Activated CD4-positive, alpha-beta T cell treated with anti-CD3 and anti-CD28 coated beads for 36 hours (primary cell): ENCODE measurements at regions of chr18 and their contacts with region 1.

Region 1: DNA sequence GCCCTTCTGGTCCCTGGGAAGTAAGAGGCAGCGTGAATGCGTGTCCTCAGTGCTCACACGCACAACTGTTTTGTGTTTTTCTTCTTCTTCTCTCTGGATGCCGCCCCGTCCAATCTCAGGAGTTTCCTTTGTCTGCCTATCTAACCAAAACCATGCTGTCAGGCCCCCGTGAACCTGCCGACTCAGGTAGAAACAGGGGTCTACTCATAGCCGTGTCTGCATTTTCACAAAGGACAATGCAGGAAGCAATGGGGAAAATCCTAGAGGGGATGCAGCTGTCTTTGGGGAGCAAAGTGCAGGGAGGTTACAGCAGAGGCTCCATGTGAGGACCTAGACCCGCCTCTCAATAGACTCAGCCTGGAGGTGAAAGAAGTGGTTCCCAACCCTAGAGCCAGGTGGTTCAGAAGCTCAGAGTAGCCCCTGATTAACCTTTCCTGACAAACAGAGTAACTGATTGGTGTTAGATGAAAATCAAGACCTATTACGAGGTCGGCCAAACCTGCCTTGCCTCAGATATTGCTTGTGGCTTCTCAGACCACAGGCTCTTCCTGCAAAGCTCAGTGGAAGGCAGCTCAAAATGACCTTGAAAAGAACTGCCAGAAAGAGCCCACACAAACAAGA is 49.3 kb downstream of the CD226 start:
- DNase-seq: peak; percentile 56
- ATAC-seq: peak; percentile 17
- H3K4me3 Mint-ChIP-seq: peak overlapping the region; percentile 67
- H3K27ac Mint-ChIP-seq: peak overlapping the region; percentile 94
- H3K4me1 Mint-ChIP-seq: peaks cover 74% of the 10 kb centered on the region
- H3K27me3 Mint-ChIP-seq: no peaks in the 10 kb centered on the region

Region 2: DNA sequence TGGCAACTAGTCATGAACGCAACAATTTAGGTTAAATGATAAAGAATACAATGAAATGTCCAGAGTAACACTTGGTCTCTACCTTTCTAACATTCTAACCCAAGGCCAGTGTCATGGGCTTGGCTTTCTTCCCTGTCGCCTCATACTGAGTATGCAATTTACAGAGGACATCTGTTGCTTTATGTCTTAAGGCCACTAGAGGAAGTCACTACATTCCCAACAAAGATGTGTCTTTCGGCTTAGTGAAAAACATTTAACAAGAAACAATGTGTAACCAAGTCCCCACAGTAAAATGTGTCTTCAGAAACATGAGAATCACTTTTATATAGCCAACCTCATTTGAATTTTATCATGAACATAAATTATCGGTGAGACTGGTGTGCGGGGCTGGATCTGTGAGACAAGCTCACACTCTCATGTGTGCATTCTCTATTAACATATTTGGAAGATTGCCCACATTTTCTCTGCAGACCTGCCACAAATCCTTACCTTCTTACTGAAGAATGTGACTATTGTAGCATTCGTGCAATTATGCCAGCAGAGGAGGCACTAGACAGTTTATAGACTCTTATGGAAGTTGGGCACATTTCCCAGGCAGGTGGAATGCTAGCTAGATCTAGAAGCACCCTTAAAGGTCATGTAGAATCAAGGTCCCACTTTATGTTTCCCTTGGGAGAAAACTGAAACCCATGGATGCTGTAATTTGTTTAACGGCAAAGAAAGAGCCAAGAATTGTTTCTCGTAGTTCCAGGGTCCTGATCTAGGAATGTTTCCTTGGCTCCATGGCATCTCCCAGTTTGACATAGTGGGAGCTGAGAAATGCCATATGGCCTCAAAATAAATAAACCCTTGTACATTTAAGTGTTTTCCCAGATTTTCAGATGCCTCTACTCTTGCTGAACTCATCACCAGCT is 52.5 kb before region 1 on chr18:
- CTCF ChIA-PET with region 1: no interaction called
- POLR2A ChIA-PET with region 1: no interaction called
- intact Hi-C with region 1: no loop called
- DNase-seq: no peak
- ATAC-seq: no peak
- H3K4me3 Mint-ChIP-seq: no peak overlapping the region
- H3K27ac Mint-ChIP-seq: no peak overlapping the region
- H3K4me1 Mint-ChIP-seq: no peaks in the 10 kb centered on the region
- H3K27me3 Mint-ChIP-seq: no peaks in the 10 kb centered on the region

Region 3: DNA sequence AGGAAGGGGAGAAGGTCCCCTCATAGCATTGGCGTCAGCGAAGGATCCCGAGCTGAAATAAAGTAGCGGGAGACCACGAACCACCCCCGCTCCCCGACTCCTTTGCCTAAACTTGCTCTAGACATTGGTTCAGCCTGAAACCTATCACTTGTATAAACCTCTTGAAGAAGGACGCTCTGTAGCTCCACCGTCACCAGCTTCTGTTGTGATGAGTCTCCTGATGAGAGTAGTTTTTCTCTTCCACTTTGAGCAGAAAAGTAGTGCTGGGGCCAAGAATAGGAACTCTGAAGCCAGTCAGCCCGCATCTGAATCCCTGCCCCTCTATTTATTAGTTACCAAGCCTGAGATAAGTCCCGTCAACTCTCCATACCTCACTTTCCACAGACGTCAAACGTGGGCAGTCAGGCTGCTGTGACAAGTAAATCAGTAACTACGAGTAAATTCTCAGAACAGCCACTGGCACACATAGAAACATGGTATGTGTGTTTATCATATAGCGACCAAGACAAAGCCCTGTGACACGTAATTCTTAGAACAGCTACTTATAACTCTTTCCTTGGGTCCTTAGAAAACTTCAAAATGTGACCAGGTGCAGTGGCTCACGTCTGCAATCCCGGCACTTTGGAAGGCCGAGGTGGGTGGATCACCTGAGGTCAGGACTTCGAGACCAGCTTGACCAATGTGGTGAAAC is 12.4 kb before region 1 on chr18:
- CTCF ChIA-PET with region 1: interaction called, 12 read pairs
- POLR2A ChIA-PET with region 1: interaction called, 22 read pairs
- intact Hi-C with region 1: loop called (anchors 1 kb)
- DNase-seq: peak; percentile 79
- ATAC-seq: peak; percentile 71
- H3K4me3 Mint-ChIP-seq: peak overlapping the region; percentile 60
- H3K27ac Mint-ChIP-seq: peak overlapping the region; percentile 95
- H3K4me1 Mint-ChIP-seq: peaks cover 89% of the 10 kb centered on the region
- H3K27me3 Mint-ChIP-seq: no peaks in the 10 kb centered on the region

Region 4: GRCh38 chr18:69908838-69909237 is 10.5 kb after region 1 on chr18:
- CTCF ChIA-PET with region 1: interaction called, 4 read pairs
- POLR2A ChIA-PET with region 1: no interaction called
- intact Hi-C with region 1: loop called in 1 of 2 experiments (anchors 1 kb)
- DNase-seq: no peak
- ATAC-seq: peak; percentile 57
- H3K4me3 Mint-ChIP-seq: no peak overlapping the region
- H3K27ac Mint-ChIP-seq: peak overlapping the region; percentile 74
- H3K4me1 Mint-ChIP-seq: peaks cover 78% of the 10 kb centered on the region
- H3K27me3 Mint-ChIP-seq: no peaks in the 10 kb centered on the region

Region 5: DNA sequence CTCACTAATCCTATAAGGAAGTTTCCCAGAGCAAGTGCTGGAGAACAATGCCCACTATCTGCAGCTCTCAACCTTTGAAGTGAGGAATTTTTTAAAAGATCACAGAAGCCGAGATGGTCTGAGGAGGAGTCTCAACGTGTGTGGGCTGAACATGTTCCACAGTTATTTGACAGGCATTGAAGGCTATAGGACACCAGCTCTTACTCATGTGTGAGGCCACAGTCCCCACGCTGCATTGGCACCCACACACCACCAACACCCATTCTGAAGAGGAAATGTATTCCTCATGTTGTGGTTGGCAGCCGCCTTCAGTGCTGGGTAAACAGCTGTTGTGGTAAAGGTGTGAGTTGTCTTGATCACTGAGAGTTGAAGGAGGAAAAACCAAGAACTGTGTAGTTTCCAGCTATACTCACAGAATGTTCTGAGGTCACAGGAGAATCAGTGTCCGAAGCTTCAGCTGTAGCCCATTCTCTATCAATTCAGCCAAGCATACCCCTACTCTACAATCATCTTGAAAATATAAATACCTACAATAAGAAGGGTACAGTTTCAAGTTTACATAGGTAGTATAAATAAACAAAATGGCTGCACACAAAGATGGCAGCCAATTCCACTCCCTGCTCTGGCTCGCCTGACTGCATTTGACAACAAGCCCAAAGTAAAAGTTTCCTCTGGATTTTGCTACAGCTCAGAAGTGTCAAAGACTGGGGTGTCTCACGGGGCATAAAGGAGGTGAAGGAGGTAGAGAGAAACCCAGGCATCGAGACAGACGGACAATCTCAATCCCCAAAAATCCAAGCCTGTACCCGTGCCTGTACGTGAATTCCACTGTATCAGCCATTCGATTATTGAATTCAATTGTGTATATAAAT is 37.2 kb after region 1 on chr18:
- CTCF ChIA-PET with region 1: interaction called, 19 read pairs
- POLR2A ChIA-PET with region 1: interaction called, 32 read pairs
- intact Hi-C with region 1: loop called (anchors 1 kb)
- DNase-seq: peak; percentile 93
- ATAC-seq: peak; percentile 92
- H3K4me3 Mint-ChIP-seq: no peak overlapping the region
- H3K27ac Mint-ChIP-seq: no peak overlapping the region
- H3K4me1 Mint-ChIP-seq: peaks cover 34% of the 10 kb centered on the region
- H3K27me3 Mint-ChIP-seq: no peaks in the 10 kb centered on the region

Region 6: DNA sequence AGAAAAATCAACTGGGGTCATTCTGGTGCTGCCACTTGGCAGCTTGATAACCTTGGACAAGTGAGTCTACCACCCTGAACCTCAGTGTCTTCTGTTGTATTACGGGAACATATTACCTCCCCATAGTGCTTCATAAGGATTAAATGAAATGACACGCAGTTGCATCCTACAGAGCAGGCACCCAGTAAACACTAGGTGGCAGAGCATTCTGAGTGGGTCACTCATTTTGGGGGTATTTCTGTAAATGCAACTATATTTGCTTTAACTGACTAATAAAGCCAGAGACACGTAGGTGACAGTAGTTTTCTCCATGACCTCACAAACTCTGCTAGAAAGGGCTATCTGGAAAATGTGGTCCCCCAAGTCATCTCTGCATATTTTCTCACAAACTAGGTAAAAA is 44.7 kb after region 1 on chr18:
- CTCF ChIA-PET with region 1: interaction called, 4 read pairs
- POLR2A ChIA-PET with region 1: interaction called, 21 read pairs
- intact Hi-C with region 1: loop called (anchors 1 kb)
- DNase-seq: peak; percentile 44
- ATAC-seq: peak; percentile 20
- H3K4me3 Mint-ChIP-seq: no peak overlapping the region
- H3K27ac Mint-ChIP-seq: peak overlapping the region; percentile 83
- H3K4me1 Mint-ChIP-seq: peaks cover 82% of the 10 kb centered on the region
- H3K27me3 Mint-ChIP-seq: no peaks in the 10 kb centered on the region

Region 7: DNA sequence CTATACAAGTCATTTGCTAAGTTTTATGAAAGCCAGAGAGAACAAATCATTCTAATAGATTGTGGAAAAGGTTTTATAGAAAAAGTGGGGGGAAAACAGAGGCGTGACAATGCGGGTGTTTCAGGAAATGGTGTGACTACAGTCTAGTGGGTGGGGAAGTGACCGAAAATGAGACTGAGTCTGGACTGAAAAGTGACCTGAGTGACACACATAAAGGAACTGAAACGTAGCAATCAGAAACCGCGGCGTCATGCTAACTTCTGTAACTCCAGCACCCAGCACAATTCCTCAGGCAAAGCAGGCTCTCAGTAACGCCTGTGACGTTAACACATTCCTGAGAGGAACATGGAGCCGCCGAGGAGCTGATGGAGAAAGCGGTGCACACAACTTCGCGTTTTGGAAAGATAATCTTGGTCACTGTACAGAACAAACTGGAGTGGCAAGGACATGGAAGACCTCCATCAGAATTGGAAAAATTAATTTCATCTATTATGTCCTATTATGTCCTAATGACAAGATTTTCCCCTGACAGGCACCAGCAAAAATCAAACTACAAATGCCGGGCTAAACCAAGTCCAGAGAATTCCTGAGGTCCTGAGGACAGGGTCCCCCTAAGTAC is 50.7 kb after region 1 on chr18:
- CTCF ChIA-PET with region 1: interaction called, 4 read pairs
- POLR2A ChIA-PET with region 1: interaction called, 21 read pairs
- intact Hi-C with region 1: loop called (anchors 1 kb)
- DNase-seq: peak; percentile 82
- ATAC-seq: peak; percentile 57
- H3K4me3 Mint-ChIP-seq: no peak overlapping the region
- H3K27ac Mint-ChIP-seq: no peak overlapping the region
- H3K4me1 Mint-ChIP-seq: peaks cover 50% of the 10 kb centered on the region
- H3K27me3 Mint-ChIP-seq: no peaks in the 10 kb centered on the region

Region 8: GRCh38 chr18:70205421-70206397 is 307.4 kb after region 1 on chr18 and contains the start of gene RTTN:
- CTCF ChIA-PET with region 1: no interaction called
- POLR2A ChIA-PET with region 1: no interaction called
- intact Hi-C with region 1: loop called in 1 of 2 experiments (anchors 5 kb)
- DNase-seq: peak; percentile 95
- ATAC-seq: peak; percentile 95
- H3K4me3 Mint-ChIP-seq: peak within 1 kb of the TSS; percentile 93
- H3K27ac Mint-ChIP-seq: peak within 1 kb of the TSS; percentile 97
- H3K4me1 Mint-ChIP-seq: peaks cover 25% of the 10 kb centered on the region
- H3K27me3 Mint-ChIP-seq: peaks cover 2% of the 10 kb centered on the region
- total RNA-seq, gene RTTN: 22.2 to 29.7 TPM

Region 9: GRCh38 chr18:71189581-71189980 is 1291.2 kb after region 1 on chr18:
- CTCF ChIA-PET with region 1: no interaction called
- POLR2A ChIA-PET with region 1: no interaction called
- intact Hi-C with region 1: no loop called
- DNase-seq: no peak
- ATAC-seq: no peak
- H3K4me3 Mint-ChIP-seq: no peak overlapping the region
- H3K27ac Mint-ChIP-seq: no peak overlapping the region
- H3K4me1 Mint-ChIP-seq: no peaks in the 10 kb centered on the region
- H3K27me3 Mint-ChIP-seq: no peaks in the 10 kb centered on the region